ENCODE measurements at regions of chr13 and their contacts with region 1.

Region 1: DNA sequence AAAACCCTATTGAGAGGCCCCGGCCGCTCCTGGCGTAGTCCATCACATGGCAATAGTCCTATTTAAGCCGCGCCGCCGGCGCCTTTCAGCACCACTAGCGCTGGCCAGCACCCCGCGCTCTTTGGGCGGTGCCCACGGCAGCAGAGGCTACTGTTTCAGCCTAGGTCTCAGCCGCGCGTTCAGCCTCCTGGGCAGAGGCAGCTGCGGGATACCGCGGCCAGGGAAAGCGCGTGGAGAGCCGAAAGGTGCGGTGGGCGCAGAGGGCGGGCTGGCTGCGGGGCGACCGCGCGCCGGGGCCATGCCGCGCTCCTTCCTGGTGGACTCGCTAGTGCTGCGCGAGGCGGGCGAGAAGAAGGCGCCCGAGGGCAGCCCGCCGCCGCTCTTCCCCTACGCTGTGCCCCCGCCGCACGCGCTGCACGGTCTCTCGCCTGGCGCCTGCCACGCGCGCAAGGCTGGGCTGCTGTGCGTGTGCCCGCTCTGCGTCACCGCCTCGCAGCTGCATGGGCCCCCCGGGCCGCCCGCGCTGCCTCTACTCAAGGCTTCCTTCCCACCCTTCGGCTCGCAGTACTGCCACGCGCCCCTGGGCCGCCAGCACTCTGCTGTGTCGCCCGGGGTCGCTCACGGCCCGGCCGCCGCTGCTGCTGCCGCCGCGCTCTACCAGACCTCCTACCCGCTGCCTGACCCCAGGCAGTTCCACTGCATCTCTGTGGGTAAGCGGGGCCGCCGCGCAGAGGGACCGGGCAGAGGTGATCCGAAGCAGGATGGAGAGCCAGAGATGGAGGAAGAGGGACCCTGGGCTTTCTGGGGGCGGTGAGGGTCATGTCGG is at the start of gene GSX1:
- DNase-seq: peak; percentile 87
- ATAC-seq: peak; percentile 51
- H3K4me3 Mint-ChIP-seq: peak within 1 kb of the TSS; percentile 59
- H3K27ac Mint-ChIP-seq: no peak within 1 kb of the TSS
- H3K4me1 Mint-ChIP-seq: peaks cover 64% of the 10 kb centered on the region
- H3K27me3 Mint-ChIP-seq: peaks cover 100% of the 10 kb centered on the region
- CTCF ChIP-seq: no peak
- total RNA-seq, gene GSX1: not detected in 3 replicates

Region 2: GRCh38 chr13:27665333-27665732 is 127.3 kb before region 1 on chr13:
- CTCF ChIA-PET with region 1: interaction called, 15 read pairs
- POLR2A ChIA-PET with region 1: no interaction called
- DNase-seq: no peak
- ATAC-seq: no peak
- H3K4me3 Mint-ChIP-seq: no peak overlapping the region
- H3K27ac Mint-ChIP-seq: peak overlapping the region; percentile 49; the same call in 1 of the 2 replicates
- H3K4me1 Mint-ChIP-seq: peaks cover 12% of the 10 kb centered on the region
- H3K27me3 Mint-ChIP-seq: no peaks in the 10 kb centered on the region
- CTCF ChIP-seq: no peak

Region 3: GRCh38 chr13:27696731-27697130 is 95.9 kb before region 1 on chr13:
- CTCF ChIA-PET with region 1: no interaction called
- POLR2A ChIA-PET with region 1: no interaction called
- DNase-seq: no peak
- ATAC-seq: no peak
- H3K4me3 Mint-ChIP-seq: no peak overlapping the region
- H3K27ac Mint-ChIP-seq: no peak overlapping the region
- H3K4me1 Mint-ChIP-seq: no peaks in the 10 kb centered on the region
- H3K27me3 Mint-ChIP-seq: no peaks in the 10 kb centered on the region; the same call in none of the 2 replicates
- CTCF ChIP-seq: no peak

Region 4: GRCh38 chr13:27775943-27776342 is 16.7 kb before region 1 on chr13:
- CTCF ChIA-PET with region 1: interaction called, 18 read pairs
- POLR2A ChIA-PET with region 1: interaction called, 3 read pairs
- DNase-seq: peak; percentile 29
- ATAC-seq: peak; percentile 83
- H3K4me3 Mint-ChIP-seq: no peak overlapping the region
- H3K27ac Mint-ChIP-seq: no peak overlapping the region
- H3K4me1 Mint-ChIP-seq: peaks cover 21% of the 10 kb centered on the region
- H3K27me3 Mint-ChIP-seq: peaks cover 71% of the 10 kb centered on the region
- CTCF ChIP-seq: no peak

Region 5: DNA sequence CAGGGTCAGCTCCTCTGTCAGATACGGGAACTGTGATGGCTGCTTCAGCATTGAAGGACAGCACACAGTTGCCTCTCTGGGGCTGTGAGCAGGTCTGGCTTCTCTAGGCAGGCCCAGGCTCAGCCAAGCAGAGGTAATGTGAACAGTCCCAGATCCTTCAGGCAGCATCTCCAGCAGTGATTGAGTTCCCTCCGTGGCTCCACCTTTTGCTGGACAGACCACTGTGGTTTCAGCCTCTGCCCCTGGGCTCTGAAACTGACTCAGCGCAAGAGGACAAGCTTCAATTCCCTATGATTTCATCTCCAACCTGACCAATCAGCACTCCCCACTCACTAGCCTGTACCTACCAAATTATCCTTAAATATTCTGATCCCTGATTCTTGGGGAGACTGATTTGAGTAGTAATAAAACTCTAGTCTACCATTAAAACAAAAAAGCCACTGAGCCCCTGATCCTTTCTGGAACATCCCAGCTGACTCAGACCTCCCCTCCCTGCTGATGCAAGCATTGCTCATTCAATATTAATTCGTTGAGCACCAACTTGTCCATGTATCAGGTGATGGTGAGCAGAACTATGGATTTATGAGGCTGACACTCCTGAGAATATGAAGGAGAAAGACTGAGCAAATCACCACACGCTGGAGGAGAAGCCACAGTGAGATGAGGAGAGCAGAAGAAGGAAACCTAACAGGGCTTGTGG is 16.4 kb after region 1 on chr13:
- CTCF ChIA-PET with region 1: interaction called, 27 read pairs
- POLR2A ChIA-PET with region 1: no interaction called
- DNase-seq: no peak
- ATAC-seq: no peak
- H3K4me3 Mint-ChIP-seq: no peak overlapping the region
- H3K27ac Mint-ChIP-seq: no peak overlapping the region
- H3K4me1 Mint-ChIP-seq: peaks cover 23% of the 10 kb centered on the region
- H3K27me3 Mint-ChIP-seq: peaks cover 77% of the 10 kb centered on the region
- CTCF ChIP-seq: no peak

Measured in WTC11 (cell line).